B cell (primary cell): ENCODE measurements at regions of chr4 and their contacts with region 1.

Region 1: DNA sequence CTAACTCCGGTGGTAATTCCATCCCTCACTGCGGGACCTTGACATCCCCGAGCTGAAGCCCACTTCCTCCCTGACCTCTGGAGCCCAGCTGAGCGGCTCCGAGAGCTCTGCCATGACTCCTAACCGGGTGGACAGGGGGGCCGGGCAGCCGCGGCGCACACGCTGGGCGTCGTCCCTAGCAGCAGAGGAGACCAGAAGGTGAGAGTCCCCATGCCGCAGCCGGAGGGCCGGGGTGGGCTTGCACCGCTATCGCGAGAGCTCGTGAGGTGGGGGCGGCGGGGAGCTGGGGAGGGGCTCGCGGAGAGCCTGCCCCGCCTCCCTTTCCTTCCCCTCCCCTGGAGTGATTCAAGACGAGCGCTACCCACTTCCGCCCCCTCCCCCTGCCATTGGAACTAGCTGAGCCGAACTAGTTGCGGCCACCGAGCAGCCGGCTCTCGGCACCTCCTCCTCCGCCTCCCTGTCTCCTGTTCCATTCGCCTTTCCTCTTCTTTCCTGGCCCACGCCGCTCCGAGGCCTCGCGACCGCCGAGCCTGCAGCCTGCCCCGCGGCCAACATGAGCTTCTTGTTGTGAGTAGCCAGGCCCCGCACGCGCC is at the start of gene MOB1B:
- DNase-seq: peak; percentile 85
- ATAC-seq: peak; percentile 95
- H3K4me3 ChIP-seq: peak within 1 kb of the TSS; percentile 72 to 98 (median 77)
- H3K4me3 Mint-ChIP-seq: peak within 1 kb of the TSS; percentile 99
- H3K27ac ChIP-seq: peak within 1 kb of the TSS; percentile 41 to 76
- H3K27ac Mint-ChIP-seq: peak within 1 kb of the TSS; percentile 89
- H3K4me1 ChIP-seq: peaks cover 13% of the 10 kb centered on the region in 2 donors
- H3K4me1 Mint-ChIP-seq: peaks cover 29% of the 10 kb centered on the region
- H3K27me3 ChIP-seq: no peaks in the 10 kb centered on the region
- H3K27me3 Mint-ChIP-seq: no peaks in the 10 kb centered on the region
- CTCF ChIP-seq: peak; percentile 61
- total RNA-seq, gene MOB1B: 30.4 and 32.4 TPM in 2 replicates

Region 2: DNA sequence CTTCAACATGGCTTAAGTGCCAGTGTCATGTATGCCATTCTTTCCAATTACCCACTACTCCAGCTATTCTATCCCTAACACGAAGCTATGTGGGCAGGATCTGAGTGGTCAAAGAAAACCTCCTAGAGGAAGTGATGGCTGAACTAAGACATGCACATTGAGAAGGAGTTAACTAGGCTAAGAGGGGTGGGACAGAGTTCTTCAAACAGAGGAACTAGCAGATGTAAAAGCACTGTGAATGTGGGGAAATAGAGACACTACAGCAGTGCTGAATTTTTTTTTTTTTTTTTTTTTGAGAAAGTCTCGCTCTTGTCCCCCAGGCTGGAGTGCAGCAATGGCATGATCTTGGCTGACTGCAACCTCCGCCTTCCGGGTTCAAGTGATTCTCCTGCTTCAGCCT is 242.0 kb before region 1 on chr4:
- CTCF ChIA-PET with region 1: no interaction called
- POLR2A ChIA-PET with region 1: interaction called, 10 read pairs
- intact Hi-C with region 1: no loop called
- DNase-seq: no peak
- ATAC-seq: no peak
- H3K4me3 ChIP-seq: no peak overlapping the region
- H3K4me3 Mint-ChIP-seq: peak overlapping the region; percentile 59
- H3K27ac ChIP-seq: no peak overlapping the region
- H3K27ac Mint-ChIP-seq: peak overlapping the region; percentile 81
- H3K4me1 ChIP-seq: peaks cover 9 to 14% of the 10 kb centered on the region in 2 donors
- H3K4me1 Mint-ChIP-seq: peaks cover 29% of the 10 kb centered on the region
- H3K27me3 ChIP-seq: no peaks in the 10 kb centered on the region
- H3K27me3 Mint-ChIP-seq: no peaks in the 10 kb centered on the region
- CTCF ChIP-seq: no peak

Region 3: DNA sequence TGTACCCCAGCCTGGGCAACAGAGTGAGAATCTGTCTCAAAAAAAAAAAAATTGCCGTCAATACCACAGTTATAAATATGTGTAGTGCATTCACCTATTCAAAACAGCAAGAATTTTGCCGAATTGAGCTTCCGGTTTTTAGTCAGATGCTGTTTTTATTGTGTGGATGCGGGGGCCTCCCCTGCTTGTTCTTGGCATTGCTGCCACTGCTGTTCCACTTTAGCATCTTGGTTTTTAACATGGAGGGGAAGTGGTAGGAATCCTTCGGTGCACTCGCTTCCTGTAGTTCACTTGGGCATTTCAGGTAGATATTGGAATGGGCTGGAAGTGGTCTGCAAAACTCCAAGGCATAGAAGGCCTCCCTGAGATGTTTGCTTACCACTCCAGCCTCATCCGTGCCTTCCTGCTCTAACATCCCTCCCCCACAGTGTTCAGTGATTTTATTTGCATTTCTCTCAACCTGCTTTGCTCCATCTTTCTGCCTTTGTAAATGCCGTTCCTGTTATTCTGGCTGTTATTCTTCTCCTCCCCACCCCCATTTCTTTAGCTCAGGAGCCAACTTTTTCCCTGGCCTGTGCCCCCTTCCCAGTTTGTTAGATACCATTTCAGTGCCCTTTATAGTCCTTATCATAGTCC is 25.5 kb after region 1 on chr4:
- CTCF ChIA-PET with region 1: interaction called, 4 read pairs
- POLR2A ChIA-PET with region 1: interaction called, 6 read pairs
- intact Hi-C with region 1: loop called (anchors 2 kb)
- DNase-seq: peak; percentile 72
- ATAC-seq: peak; percentile 61
- H3K4me3 ChIP-seq: peak overlapping the region in 1 of 5 experiments; percentile 13
- H3K4me3 Mint-ChIP-seq: peak overlapping the region; percentile 61
- H3K27ac ChIP-seq: peak overlapping the region; percentile 55 to 67
- H3K27ac Mint-ChIP-seq: peak overlapping the region; percentile 72
- H3K4me1 ChIP-seq: peaks cover 40 to 47% of the 10 kb centered on the region in 2 donors
- H3K4me1 Mint-ChIP-seq: peaks cover 52% of the 10 kb centered on the region
- H3K27me3 ChIP-seq: no peaks in the 10 kb centered on the region
- H3K27me3 Mint-ChIP-seq: no peaks in the 10 kb centered on the region
- CTCF ChIP-seq: peak; percentile 19